ENCODE measurements at regions of chr2 and their contacts with region 1.

Region 1: DNA sequence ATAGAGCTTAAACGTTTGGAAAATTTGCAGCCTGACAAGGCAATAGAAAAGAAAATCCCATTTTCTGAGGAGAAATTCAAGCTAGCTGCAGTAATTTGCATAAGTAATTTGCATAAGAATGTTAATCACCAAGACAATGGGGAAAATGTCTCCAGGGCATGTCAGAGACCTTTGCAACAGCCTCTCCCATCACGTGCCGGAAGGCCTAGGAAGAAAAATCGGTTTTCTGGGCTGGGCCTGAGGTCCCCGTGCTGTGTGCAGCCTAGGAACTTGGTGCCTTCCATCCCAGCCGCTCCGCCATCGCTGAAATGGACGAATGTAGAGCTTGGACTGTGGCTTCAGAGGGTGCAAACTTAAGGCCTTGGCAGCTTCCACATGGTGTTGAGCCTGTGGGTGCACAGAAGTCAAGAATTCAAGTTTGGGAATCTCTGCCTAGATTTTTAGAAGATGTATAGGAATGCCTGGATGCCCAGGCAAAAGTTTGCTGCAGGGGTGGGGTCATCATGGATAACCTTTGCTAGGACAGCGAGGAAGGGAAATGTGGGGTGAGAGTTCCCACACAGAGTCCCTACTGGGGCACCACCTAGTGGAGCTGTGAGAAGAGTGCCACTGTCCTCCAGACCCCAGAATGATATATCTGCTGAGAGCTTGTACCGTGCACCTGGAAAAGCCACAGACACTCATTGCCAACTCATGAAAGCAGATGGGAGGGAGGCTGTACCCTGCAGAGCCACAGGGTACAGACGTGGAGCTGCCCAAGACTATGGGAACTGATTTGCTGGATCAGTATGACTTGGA is 164.6 kb downstream of the GULP1 start:
- DNase-seq: peak; percentile 67
- ATAC-seq: peak; percentile 97
- H3K4me3 Mint-ChIP-seq: peak overlapping the region; percentile 14; the same call in 1 of the 2 replicates
- H3K27ac Mint-ChIP-seq: peak overlapping the region; percentile 95
- H3K4me1 Mint-ChIP-seq: peaks cover 57% of the 10 kb centered on the region
- H3K27me3 Mint-ChIP-seq: peaks cover 2% of the 10 kb centered on the region; the same call in 1 of the 2 replicates
- CTCF ChIP-seq: 0 out of 2 replicates have a peak, but pooled peaks have one; percentile 32

Region 2: DNA sequence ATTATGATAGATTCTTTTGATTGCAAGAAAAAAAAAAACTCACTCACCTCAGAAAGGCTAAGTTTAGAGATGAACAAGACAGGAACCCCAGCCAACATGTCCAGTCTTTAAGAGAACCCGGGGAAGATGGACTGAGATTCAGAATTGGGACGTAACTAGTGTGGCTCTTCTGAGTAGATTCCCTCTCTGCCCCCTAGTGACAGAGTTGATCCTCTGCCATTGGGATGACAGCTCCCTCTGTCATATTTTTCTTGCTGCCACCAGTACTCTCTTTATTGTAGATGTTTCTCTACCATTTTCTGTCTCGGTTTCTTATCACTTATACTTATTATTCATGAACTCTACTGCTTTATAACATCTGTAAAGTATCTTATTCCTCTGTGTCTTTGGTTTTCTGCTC is 86.9 kb before region 1 on chr2:
- CTCF ChIA-PET with region 1: interaction called, 10 read pairs
- POLR2A ChIA-PET with region 1: no interaction called
- DNase-seq: peak; percentile 16
- ATAC-seq: peak; percentile 79
- H3K4me3 Mint-ChIP-seq: no peak overlapping the region
- H3K27ac Mint-ChIP-seq: peak overlapping the region; percentile 25
- H3K4me1 Mint-ChIP-seq: peaks cover 67% of the 10 kb centered on the region
- H3K27me3 Mint-ChIP-seq: no peaks in the 10 kb centered on the region
- CTCF ChIP-seq: peak; percentile 50; the same call in 1 of the 2 replicates

Measured in WTC11 (cell line).